Activated CD4-positive, alpha-beta T cell treated with anti-CD3 and anti-CD28 coated beads, Interleukin-2, amount 10 ng/mL, durations not matched to agents 24 days and 14 days (primary cell): ENCODE measurements at regions of chr11 and their contacts with region 1.

Region 1: DNA sequence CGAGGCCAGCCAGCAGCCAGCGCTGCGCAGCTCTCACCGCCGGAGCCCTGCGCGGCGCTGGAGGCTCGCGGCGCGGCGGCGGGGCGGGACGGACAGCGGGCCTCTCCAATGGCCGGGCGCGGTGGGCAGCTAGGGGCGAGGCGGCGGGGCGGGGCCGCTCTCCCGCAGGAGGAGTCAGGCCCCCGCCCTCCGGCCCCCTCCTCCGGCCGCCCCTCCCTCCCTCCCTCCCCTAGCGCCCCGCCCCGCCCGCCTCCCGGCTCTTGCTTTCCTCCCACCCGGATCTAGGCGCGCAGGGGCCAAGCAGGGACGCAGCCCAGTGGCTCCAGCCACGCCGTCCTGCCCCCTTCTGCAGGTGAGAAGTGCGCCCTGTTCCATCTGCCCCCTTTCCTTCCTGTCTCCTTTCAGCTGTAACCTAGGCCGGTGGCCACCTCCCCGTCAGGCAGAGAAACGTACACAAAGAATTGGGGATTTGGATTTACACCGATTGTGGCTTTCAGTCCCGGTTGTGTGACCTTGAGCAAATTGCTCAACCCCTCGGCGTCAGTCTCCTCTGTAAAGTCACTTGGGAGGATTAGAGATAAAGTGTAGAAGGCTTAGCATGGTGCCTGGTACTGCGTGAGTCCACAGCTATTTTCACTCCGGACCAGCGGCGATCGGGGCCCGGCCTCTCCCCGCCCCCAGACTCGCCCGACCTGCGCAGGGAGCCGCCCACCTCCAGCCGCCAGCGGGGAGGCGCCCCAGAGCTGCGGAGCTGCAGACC is at the start of gene FZD4:
- DNase-seq: peak; percentile 85
- H3K4me3 Mint-ChIP-seq: peak within 1 kb of the TSS; percentile 90
- H3K27ac Mint-ChIP-seq: no peak within 1 kb of the TSS
- H3K4me1 Mint-ChIP-seq: peaks cover 7% of the 10 kb centered on the region
- H3K27me3 Mint-ChIP-seq: peaks cover 72% of the 10 kb centered on the region
- total RNA-seq, gene FZD4: 0.02 TPM in 1 of 2 replicates, not detected in the other

Region 2: GRCh38 chr11:87037450-87038234 is 82.1 kb after region 1 on chr11 and contains the start of gene TMEM135:
- intact Hi-C with region 1: loop called (anchors 5 kb)
- DNase-seq: peak; percentile 99
- H3K4me3 Mint-ChIP-seq: peak within 1 kb of the TSS; percentile 96
- H3K27ac Mint-ChIP-seq: peak within 1 kb of the TSS; percentile 93
- H3K4me1 Mint-ChIP-seq: peaks cover 51% of the 10 kb centered on the region
- H3K27me3 Mint-ChIP-seq: peaks cover 14% of the 10 kb centered on the region
- total RNA-seq, gene TMEM135: 26.2 and 28.6 TPM in 2 replicates